PC-3 (cell line): ENCODE measurements at regions of chr12 and their contacts with region 1.

Region 1: GRCh38 chr12:109309381-109310246 is 530 bp upstream of the FOXN4 start:
- DNase-seq: no peak
- ATAC-seq: peak; percentile 35
- H3K4me3 ChIP-seq: peak overlapping the region; percentile 48
- H3K27ac ChIP-seq: no peak overlapping the region
- H3K4me1 ChIP-seq: peaks cover 4% of the 10 kb centered on the region; the same call in 1 of the 2 replicates
- H3K27me3 ChIP-seq: peaks cover 95% of the 10 kb centered on the region
- CTCF ChIP-seq: no peak

Region 2: GRCh38 chr12:108930155-108930554 is 379.5 kb before region 1 on chr12:
- CTCF ChIA-PET with region 1: no interaction called
- POLR2A ChIA-PET with region 1: no interaction called
- intact Hi-C with region 1: no loop called
- DNase-seq: no peak
- ATAC-seq: peak; percentile 71
- H3K4me3 ChIP-seq: no peak overlapping the region
- H3K27ac ChIP-seq: no peak overlapping the region
- H3K4me1 ChIP-seq: no peaks in the 10 kb centered on the region
- H3K27me3 ChIP-seq: peaks cover 15% of the 10 kb centered on the region
- CTCF ChIP-seq: no peak

Region 3: GRCh38 chr12:109331301-109331952 is 21.8 kb after region 1 on chr12:
- CTCF ChIA-PET with region 1: interaction called, 13 read pairs
- POLR2A ChIA-PET with region 1: no interaction called
- intact Hi-C with region 1: no loop called
- DNase-seq: no peak
- ATAC-seq: no peak
- H3K4me3 ChIP-seq: no peak overlapping the region
- H3K27ac ChIP-seq: no peak overlapping the region
- H3K4me1 ChIP-seq: no peaks in the 10 kb centered on the region
- H3K27me3 ChIP-seq: peaks cover 61% of the 10 kb centered on the region
- CTCF ChIP-seq: no peak

Region 4: DNA sequence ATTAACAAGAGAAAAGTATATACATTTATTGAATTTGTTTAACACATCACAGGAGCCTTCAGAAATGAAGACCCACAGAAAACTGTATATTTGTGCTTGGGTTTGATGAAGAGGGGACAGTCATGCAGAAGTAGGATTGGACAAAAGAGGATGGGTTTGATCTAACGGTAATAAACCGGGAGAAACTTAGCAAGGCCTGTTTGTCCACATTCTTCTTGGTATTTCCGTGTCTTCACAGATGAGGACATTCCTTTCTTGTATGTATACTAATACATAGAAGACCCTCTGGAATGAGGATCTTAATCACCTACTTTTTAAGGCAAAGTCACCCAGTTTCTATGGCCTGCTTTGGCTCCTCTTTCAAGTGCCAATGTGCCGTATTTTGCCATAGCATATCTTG is 52.9 kb after region 1 on chr12:
- CTCF ChIA-PET with region 1: no interaction called
- POLR2A ChIA-PET with region 1: no interaction called
- intact Hi-C with region 1: loop called (anchors 5 kb)
- DNase-seq: no peak
- ATAC-seq: no peak
- H3K4me3 ChIP-seq: no peak overlapping the region
- H3K27ac ChIP-seq: no peak overlapping the region
- H3K4me1 ChIP-seq: no peaks in the 10 kb centered on the region
- H3K27me3 ChIP-seq: peaks cover 95% of the 10 kb centered on the region
- CTCF ChIP-seq: no peak